Activated naive CD4-positive, alpha-beta T cell treated with anti-CD3 and anti-CD28 coated beads for 36 hours (primary cell): ENCODE measurements at regions of chr19 and their contacts with region 1.

Region 1: DNA sequence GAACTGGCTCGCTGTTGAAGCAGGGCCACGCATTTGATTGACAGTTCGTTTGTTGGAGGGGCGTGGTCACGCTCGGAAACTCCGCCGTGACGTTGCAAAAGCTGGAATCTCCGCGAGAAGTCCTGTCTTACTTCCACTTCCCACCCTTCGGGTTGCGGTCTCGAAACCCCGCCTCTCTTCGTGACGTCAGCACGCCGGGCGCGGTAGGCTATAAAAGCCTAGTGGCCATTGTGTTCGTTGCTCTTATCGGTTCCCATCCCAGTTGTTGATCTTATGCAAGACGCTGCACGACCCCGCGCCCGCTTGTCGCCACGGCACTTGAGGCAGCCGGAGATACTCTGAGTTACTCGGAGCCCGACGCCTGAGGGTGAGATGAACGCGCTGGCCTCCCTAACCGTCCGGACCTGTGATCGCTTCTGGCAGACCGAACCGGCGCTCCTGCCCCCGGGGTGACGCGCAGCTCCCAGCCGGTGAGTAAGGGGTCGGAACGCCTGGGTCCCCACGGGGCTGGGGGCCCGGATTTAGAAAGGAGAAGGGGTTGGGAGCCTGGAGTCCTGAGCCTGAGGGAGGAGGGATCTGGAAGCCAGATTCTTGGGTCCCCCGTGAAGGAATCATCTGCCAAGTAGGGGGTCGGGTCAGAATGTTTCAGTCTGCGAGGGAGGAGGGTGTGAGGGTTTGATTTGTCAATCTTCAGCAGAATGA is at the start of gene PPP1R15A:
- DNase-seq: peak; percentile 99
- H3K4me3 Mint-ChIP-seq: peak within 1 kb of the TSS; percentile 99
- H3K27ac Mint-ChIP-seq: peak within 1 kb of the TSS; percentile 99
- H3K4me1 Mint-ChIP-seq: peaks cover 34% of the 10 kb centered on the region
- H3K27me3 Mint-ChIP-seq: no peaks in the 10 kb centered on the region
- total RNA-seq, gene PPP1R15A: 96.5 to 97.4 TPM

Region 2: DNA sequence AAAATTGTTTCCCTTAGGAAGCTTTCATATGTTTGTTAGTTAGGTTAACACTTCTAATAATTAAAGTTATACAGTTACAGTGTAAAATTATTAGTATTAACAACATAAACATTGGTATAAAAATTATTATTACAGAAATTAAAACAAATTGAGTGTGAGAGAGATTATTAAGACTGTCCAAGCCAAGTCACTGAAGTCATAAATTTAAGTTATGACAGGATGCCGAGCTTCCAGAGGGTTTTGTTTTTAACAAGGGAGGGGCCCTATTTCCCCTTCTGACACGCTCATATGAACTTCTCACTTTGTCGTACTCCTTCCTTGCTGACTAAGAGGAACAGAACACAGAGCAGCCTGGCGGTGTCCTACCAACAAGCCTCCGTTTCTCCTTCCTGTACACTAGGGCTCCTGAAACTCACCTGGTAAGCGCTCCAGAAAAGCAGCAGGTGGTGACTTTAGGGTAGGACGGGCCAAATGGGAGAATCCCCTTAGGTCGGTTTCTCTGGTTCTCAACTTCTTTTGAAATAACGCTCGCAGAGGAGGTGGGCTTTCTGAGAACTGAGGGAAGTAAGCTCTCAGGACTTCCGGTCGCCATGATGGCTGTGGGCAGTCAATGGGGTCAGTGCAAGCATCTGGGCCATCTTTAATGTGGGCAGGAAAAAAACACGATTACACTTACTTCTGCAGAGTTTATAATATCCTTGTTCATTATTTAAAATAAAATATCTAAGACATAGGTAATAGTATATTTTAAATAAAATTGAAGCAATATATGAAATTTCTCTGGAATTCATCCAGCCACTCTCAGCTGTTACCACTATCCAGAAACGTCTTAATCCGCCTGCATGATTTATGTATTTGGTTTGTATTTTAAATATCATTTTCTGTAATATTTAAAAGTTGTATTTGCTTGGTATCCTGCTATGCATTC is 616.7 kb before region 1 on chr19 and contains the start of gene CARD8:
- CTCF ChIA-PET with region 1: no interaction called
- intact Hi-C with region 1: loop called (anchors 10 kb)
- DNase-seq: peak; percentile 88
- H3K4me3 Mint-ChIP-seq: peak within 1 kb of the TSS; percentile 92
- H3K27ac Mint-ChIP-seq: peak within 1 kb of the TSS; percentile 97
- H3K4me1 Mint-ChIP-seq: peaks cover 65% of the 10 kb centered on the region
- H3K27me3 Mint-ChIP-seq: no peaks in the 10 kb centered on the region
- total RNA-seq, gene CARD8: 99.8 to 104 TPM

Region 3: DNA sequence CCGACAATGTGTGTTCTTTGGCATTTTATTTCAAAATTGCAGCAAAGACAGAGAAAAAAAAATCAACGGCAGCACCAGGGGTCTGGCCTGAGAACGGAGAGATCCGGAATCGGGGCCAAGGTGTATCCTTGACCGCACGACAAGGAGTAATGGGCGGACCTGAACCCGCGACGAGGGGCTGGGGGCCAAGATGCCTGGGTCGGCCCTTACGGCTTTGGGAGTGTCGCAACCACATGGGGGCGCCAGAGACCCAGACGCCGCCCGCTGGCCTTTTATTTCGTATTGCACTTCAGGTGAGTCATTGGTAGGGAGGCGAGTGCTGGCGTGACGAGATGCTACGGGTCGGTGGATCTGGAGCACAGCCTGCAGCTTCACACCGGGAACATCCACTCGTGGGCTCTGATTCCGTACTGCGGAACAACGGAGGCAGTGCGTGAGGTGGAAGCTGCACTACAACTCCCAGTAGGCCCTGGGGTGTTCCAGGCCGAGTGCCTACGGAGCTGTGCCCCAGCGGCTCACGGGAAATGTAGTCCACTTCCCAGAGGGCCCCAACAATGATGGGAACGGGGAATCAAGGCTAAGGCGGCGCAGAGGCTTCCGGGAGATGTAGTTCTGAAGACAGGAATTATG is 77.2 kb before region 1 on chr19:
- CTCF ChIA-PET with region 1: no interaction called
- intact Hi-C with region 1: loop called (anchors 2 kb)
- DNase-seq: peak; percentile 89
- H3K4me3 Mint-ChIP-seq: peak overlapping the region; percentile 82
- H3K27ac Mint-ChIP-seq: peak overlapping the region; percentile 87
- H3K4me1 Mint-ChIP-seq: peaks cover 10% of the 10 kb centered on the region
- H3K27me3 Mint-ChIP-seq: no peaks in the 10 kb centered on the region

Region 4: GRCh38 chr19:48858984-48859710 is 13.2 kb before region 1 on chr19:
- CTCF ChIA-PET with region 1: interaction called, 3 read pairs
- intact Hi-C with region 1: loop called (anchors 1 kb)
- DNase-seq: peak; percentile 93
- H3K4me3 Mint-ChIP-seq: peak overlapping the region; percentile 95
- H3K27ac Mint-ChIP-seq: peak overlapping the region; percentile 85
- H3K4me1 Mint-ChIP-seq: peaks cover 4% of the 10 kb centered on the region
- H3K27me3 Mint-ChIP-seq: no peaks in the 10 kb centered on the region

Region 5: DNA sequence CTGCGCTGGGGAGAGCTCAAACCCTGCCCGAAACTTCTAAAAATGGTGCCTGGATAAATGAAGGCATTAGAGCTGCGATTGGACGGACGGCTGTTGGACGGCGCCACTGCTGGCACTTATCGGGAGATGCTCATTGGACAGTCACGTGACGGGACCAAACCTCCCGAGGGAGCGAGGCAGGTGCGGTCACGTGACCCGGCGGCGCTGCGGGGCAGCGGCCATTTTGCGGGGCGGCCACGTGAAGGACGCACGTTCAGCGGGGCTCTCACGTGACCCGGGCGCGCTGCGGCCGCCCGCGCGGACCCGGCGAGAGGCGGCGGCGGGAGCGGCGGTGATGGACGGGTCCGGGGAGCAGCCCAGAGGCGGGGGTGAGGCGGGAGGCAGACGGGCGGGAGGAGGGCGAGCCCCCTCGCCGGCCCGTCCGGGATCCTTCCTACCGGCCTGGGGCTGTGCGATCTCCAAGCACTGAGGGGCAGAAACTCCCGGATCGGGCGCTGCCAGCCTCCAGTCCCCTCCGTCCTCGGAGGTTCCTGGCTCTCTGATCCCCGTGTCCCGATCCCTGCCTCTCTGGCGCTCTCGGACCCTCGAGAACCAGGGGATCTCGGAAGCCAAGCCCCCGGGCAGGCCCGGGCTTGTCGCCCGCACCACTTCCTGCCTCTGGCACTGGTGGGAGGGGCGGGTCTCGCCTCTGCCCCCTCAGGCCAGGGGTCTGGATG is 82.4 kb after region 1 on chr19 and contains the start of gene BAX:
- CTCF ChIA-PET with region 1: no interaction called
- intact Hi-C with region 1: loop called (anchors 2 kb)
- DNase-seq: peak; percentile 98
- H3K4me3 Mint-ChIP-seq: peak within 1 kb of the TSS; percentile 77
- H3K27ac Mint-ChIP-seq: peak within 1 kb of the TSS; percentile 89
- H3K4me1 Mint-ChIP-seq: peaks cover 29% of the 10 kb centered on the region
- H3K27me3 Mint-ChIP-seq: no peaks in the 10 kb centered on the region
- total RNA-seq, gene BAX: 267 to 302 TPM

Region 6: GRCh38 chr19:48993175-48994034 is 121.1 kb after region 1 on chr19 and contains the starts of genes GYS1 and RUVBL2:
- CTCF ChIA-PET with region 1: interaction called, 5 read pairs
- intact Hi-C with region 1: loop called (anchors 1 kb)
- DNase-seq: peak; percentile 99
- H3K4me3 Mint-ChIP-seq: peak within 1 kb of the TSS; percentile 83
- H3K27ac Mint-ChIP-seq: peak within 1 kb of the TSS; percentile 94
- H3K4me1 Mint-ChIP-seq: peaks cover 44% of the 10 kb centered on the region
- H3K27me3 Mint-ChIP-seq: no peaks in the 10 kb centered on the region
- total RNA-seq, gene GYS1: 29.6 to 31.2 TPM
- total RNA-seq, gene RUVBL2: 119 to 126 TPM

Region 7: GRCh38 chr19:49182848-49183344 is 310.6 kb after region 1 on chr19:
- CTCF ChIA-PET with region 1: no interaction called
- intact Hi-C with region 1: no loop called
- DNase-seq: no peak
- H3K4me3 Mint-ChIP-seq: no peak overlapping the region
- H3K27ac Mint-ChIP-seq: no peak overlapping the region
- H3K4me1 Mint-ChIP-seq: no peaks in the 10 kb centered on the region
- H3K27me3 Mint-ChIP-seq: peaks cover 5% of the 10 kb centered on the region